Activated CD4-positive, alpha-beta T cell treated with anti-CD3 and anti-CD28 coated beads for 36 hours (primary cell): ENCODE measurements at regions of chrX and their contacts with region 1.

Region 1: DNA sequence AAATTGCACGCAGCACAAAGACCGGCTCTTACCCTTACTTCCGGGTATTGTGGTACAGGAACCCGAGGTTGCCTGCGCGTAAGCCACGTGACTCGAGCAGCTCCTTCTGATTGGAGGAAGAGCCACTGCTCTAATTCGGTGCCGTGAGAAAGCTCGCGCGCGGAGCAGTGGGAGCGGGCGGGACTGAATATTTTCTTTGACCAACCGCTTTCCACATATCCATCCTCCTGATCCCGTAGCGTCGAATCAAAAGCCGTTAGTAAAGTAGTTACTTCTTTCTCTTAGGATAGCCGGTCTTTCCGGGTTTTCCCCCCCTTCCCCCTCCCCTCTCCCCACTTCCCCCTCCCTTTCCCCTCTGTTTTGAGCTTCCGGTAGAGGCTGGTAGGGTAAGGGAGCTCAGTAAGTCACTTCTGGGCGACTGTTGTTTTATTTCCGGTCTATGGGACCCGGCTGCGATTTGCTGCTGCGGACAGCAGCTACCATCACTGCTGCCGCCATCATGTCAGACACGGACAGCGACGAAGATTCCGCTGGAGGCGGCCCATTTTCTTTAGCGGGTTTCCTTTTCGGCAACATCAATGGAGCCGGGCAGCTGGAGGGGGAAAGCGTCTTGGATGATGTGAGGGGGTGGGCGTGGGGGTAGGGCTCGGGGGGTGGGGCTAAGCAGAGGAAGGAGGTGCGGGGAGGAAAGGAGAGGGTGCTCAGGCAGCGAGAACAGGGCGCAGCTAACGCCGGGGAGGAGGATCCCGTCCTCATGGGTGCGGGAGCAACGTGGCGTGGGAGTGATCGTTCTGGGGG is at the start of gene TAF1:
- DNase-seq: peak; percentile 95
- ATAC-seq: peak; percentile 92
- H3K4me3 Mint-ChIP-seq: peak within 1 kb of the TSS; percentile 92
- H3K27ac Mint-ChIP-seq: peak within 1 kb of the TSS; percentile 98
- H3K4me1 Mint-ChIP-seq: peaks cover 20% of the 10 kb centered on the region
- H3K27me3 Mint-ChIP-seq: no peaks in the 10 kb centered on the region
- total RNA-seq, gene TAF1: 36.6 to 41.2 TPM

Region 2: GRCh38 chrX:71095543-71095911 is 270.5 kb before region 1 on chrX and contains the start of gene FOXO4:
- CTCF ChIA-PET with region 1: no interaction called
- POLR2A ChIA-PET with region 1: no interaction called
- intact Hi-C with region 1: loop called in 1 of 2 experiments (anchors 1 kb)
- DNase-seq: peak; percentile 92
- ATAC-seq: peak; percentile 93
- H3K4me3 Mint-ChIP-seq: peak within 1 kb of the TSS; percentile 89
- H3K27ac Mint-ChIP-seq: peak within 1 kb of the TSS; percentile 83
- H3K4me1 Mint-ChIP-seq: peaks cover 27% of the 10 kb centered on the region
- H3K27me3 Mint-ChIP-seq: no peaks in the 10 kb centered on the region
- total RNA-seq, gene FOXO4: 9.5 to 10.8 TPM

Region 3: DNA sequence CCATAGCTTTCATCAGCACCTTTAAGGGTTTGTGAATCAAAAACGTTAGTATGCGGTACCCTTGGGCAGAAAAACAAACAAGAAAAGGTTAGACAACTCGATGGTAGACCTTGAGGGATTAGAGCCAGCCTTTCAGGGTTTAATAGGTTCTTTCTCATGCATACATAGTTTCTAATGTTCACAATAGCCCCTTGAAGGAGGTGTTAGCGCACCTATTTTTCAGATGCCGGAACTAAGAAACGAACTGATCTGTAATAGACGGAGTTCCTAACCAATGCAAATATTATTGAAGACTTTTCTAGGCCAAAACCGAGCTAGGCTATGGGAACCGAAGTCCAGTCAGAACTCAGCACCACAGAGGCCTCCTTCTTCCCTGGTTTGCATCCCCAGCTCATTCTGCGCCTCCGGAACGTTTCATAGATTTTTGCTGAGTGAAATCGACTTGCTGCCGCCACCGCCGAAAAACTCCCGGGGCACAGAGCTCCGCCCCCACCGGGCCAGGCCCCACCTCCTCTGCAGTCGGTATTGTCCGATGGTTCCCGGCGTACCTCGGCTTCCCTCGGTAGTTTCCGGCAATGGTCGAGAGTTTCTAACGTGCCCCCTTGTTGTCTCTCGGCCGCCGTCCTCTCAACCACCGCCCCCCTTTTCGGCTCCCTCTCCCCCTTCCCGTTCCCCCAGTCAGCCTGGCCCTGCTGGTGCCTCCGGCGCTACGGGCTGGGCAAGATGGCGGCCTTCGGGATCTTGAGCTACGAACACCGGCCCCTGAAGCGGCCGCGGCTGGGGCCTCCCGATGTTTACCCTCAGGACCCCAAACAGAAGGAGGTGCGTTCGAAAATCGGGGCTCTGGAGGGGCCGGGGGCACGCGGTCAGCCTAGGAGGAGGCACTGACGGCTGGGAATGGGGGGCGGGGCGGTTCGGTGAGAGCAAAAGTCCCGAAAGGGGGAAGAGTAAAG is 247.8 kb before region 1 on chrX and contains the start of gene MED12:
- CTCF ChIA-PET with region 1: no interaction called
- POLR2A ChIA-PET with region 1: interaction called, 4 read pairs
- intact Hi-C with region 1: loop called (anchors 5 kb)
- DNase-seq: peak; percentile 91
- ATAC-seq: peak; percentile 98
- H3K4me3 Mint-ChIP-seq: peak within 1 kb of the TSS; percentile 79
- H3K27ac Mint-ChIP-seq: peak within 1 kb of the TSS; percentile 87
- H3K4me1 Mint-ChIP-seq: peaks cover 23% of the 10 kb centered on the region
- H3K27me3 Mint-ChIP-seq: no peaks in the 10 kb centered on the region
- total RNA-seq, gene MED12: 46.2 to 56.4 TPM

Region 4: DNA sequence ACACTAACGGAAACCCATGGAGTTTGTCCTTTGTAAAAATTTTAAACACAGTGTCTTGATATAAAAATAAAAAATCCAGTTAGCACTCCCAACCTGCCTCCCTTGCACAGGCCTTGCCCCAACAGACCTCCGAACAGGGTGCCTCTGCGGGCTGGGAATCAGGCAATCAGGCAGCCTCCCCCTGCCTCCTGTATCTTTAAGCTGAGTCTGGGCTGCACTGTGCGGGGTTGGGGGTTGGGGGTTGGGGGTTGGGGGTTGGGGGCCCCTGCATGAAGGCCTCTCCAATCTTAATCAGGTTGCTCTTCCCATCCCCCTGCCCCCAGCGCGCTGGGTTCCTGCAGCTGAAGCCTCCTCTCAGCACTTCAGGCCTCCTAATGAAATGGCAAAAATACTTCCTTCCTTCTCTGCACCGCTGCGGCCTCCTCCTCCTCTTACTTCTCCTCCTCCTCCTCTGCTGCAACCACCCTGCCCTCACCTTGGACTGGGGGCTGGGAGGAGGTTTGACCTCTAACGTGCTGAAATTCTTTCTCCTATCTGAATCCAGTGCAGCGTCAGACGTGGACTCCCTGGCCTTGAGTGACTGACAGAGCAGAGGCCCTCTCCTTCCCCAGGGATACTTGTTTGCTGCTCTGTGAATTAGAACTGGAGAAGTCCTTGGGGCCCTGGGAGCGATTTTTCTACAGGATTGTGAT is 194.8 kb before region 1 on chrX:
- CTCF ChIA-PET with region 1: no interaction called
- POLR2A ChIA-PET with region 1: no interaction called
- intact Hi-C with region 1: no loop called
- DNase-seq: no peak
- ATAC-seq: no peak
- H3K4me3 Mint-ChIP-seq: no peak overlapping the region
- H3K27ac Mint-ChIP-seq: no peak overlapping the region
- H3K4me1 Mint-ChIP-seq: peaks cover 9% of the 10 kb centered on the region
- H3K27me3 Mint-ChIP-seq: no peaks in the 10 kb centered on the region

Region 5: GRCh38 chrX:71254092-71254941 is 111.8 kb before region 1 on chrX and contains the start of gene ZMYM3:
- CTCF ChIA-PET with region 1: no interaction called
- POLR2A ChIA-PET with region 1: interaction called, 5 read pairs
- intact Hi-C with region 1: loop called in 1 of 2 experiments (anchors 1 kb)
- DNase-seq: peak; percentile 87
- ATAC-seq: peak; percentile 86
- H3K4me3 Mint-ChIP-seq: peak within 1 kb of the TSS; percentile 84
- H3K27ac Mint-ChIP-seq: peak within 1 kb of the TSS; percentile 83
- H3K4me1 Mint-ChIP-seq: peaks cover 29% of the 10 kb centered on the region
- H3K27me3 Mint-ChIP-seq: no peaks in the 10 kb centered on the region
- total RNA-seq, gene ZMYM3: 22.6 to 22.8 TPM

Region 6: GRCh38 chrX:71320126-71320525 is 45.9 kb before region 1 on chrX:
- CTCF ChIA-PET with region 1: no interaction called
- POLR2A ChIA-PET with region 1: no interaction called
- intact Hi-C with region 1: no loop called
- DNase-seq: no peak
- ATAC-seq: no peak
- H3K4me3 Mint-ChIP-seq: no peak overlapping the region
- H3K27ac Mint-ChIP-seq: no peak overlapping the region
- H3K4me1 Mint-ChIP-seq: no peaks in the 10 kb centered on the region
- H3K27me3 Mint-ChIP-seq: no peaks in the 10 kb centered on the region

Region 7: GRCh38 chrX:71532753-71533425 is 166.8 kb after region 1 on chrX and contains the start of gene OGT:
- CTCF ChIA-PET with region 1: no interaction called
- POLR2A ChIA-PET with region 1: interaction called, 36 read pairs
- intact Hi-C with region 1: loop called (anchors 2 kb)
- DNase-seq: peak; percentile 96
- ATAC-seq: peak; percentile 76
- H3K4me3 Mint-ChIP-seq: peak within 1 kb of the TSS; percentile 96
- H3K27ac Mint-ChIP-seq: peak within 1 kb of the TSS; percentile 98
- H3K4me1 Mint-ChIP-seq: peaks cover 26% of the 10 kb centered on the region
- H3K27me3 Mint-ChIP-seq: no peaks in the 10 kb centered on the region
- total RNA-seq, gene OGT: 331 to 339 TPM